PC-9 (cell line): ENCODE measurements at regions of chr1 and their contacts with region 1.

Region 1: DNA sequence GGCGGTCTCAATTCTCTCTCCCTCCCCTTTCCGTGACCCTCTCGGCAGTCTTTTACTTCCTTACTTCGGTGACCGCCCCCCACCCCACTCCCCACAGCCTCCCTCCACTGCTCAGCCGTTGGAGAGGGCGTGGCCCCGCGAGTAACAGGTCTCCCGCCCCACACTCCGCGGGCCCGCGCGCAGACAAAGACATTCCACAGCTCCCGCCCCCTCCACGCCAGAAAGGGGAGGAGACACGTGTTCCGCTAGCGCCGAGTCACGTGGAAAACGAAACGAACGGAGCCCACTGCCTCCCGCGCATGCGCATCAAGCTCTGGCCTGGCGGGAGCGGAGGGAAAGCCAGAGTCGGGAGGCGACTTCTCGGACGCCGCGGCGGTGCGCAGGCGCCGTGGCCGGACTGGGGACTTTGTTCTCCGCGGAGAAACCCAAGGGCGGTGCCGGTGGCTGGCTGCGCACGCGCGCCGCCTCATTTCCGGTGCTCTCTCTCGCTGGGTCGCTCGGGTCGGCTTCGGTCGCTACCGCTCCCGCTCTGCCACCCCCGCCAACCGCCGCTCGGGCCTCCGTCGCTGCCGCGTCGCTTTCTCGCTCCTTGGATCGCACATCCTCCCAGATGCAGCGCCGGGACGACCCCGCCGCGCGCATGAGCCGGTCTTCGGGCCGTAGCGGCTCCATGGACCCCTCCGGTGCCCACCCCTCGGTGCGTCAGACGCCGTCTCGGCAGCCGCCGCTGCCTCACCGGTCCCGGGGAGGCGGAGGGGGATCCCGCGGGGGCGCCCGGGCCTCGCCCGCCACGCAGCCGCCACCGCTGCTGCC is at the start of gene KHDRBS1:
- DNase-seq: peak; percentile 95 to 98
- H3K4me3 ChIP-seq: peak within 1 kb of the TSS; percentile 91
- H3K27ac ChIP-seq: peak within 1 kb of the TSS; percentile 74
- H3K4me1 ChIP-seq: peaks cover 23% of the 10 kb centered on the region
- H3K27me3 ChIP-seq: no peaks in the 10 kb centered on the region
- CTCF ChIP-seq: no peak
- total RNA-seq, gene KHDRBS1: 161 and 172 TPM in 2 replicates

Region 2: DNA sequence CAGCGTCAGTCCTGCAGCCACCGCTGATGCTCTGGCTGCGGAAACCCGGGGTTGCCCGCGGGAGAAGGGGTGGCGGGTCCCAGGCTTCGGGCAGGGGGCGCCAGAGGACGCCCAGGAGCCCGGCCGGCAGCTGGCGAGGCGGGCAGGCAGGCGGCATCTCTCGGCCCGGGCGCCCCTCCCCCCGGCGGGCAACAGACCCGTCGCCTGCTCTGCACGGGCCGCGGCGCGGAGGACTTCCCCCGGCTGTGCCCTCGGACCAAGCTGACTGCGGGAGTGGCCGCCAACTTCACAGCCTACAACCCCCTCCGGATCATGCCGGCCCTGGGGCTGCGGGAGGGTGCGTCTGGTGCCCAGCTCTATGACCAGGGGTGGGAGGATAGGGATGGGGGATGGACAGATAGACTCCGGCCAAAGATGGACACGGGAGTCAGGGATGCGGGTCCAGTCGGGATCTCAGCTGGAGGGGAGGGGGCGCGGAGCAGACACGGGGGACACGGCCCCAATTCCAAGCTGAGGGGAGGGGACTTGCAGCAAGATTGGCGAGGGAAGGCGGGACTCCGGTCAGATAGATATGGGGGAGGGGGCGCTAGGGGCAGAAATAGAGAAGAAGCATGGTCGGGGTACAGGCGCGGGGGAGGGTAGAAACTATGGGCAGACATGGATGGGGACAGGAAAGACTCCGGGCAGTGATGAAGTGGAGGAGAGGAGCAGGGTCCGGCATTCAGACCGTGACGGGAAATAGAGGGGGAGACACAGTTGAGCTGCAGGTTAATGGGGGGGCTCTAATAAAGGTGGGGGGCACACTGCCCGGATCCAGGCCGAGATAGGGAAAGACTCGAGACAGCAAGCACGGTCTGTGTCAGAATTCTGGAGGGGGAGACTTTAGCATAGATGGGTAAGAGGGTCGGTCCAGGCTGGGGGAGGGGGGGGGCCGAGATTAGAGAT is 250.6 kb before region 1 on chr1:
- CTCF ChIA-PET with region 1: no interaction called
- POLR2A ChIA-PET with region 1: no interaction called
- intact Hi-C with region 1: loop called (anchors 5 kb)
- DNase-seq: peak; percentile 65 to 88
- H3K4me3 ChIP-seq: peak overlapping the region; percentile 62
- H3K27ac ChIP-seq: no peak overlapping the region
- H3K4me1 ChIP-seq: peaks cover 32% of the 10 kb centered on the region
- H3K27me3 ChIP-seq: peaks cover 5% of the 10 kb centered on the region; the same call in 1 of the 2 replicates
- CTCF ChIP-seq: peak; percentile 90

Region 3: GRCh38 chr1:31910933-31911332 is 102.7 kb before region 1 on chr1:
- CTCF ChIA-PET with region 1: no interaction called
- POLR2A ChIA-PET with region 1: interaction called, 22 read pairs
- intact Hi-C with region 1: no loop called
- DNase-seq: no peak
- H3K4me3 ChIP-seq: no peak overlapping the region
- H3K27ac ChIP-seq: peak overlapping the region; percentile 9; the same call in 1 of the 2 replicates
- H3K4me1 ChIP-seq: peaks cover 21% of the 10 kb centered on the region; the same call in 1 of the 2 replicates
- H3K27me3 ChIP-seq: no peaks in the 10 kb centered on the region
- CTCF ChIP-seq: no peak

Region 4: DNA sequence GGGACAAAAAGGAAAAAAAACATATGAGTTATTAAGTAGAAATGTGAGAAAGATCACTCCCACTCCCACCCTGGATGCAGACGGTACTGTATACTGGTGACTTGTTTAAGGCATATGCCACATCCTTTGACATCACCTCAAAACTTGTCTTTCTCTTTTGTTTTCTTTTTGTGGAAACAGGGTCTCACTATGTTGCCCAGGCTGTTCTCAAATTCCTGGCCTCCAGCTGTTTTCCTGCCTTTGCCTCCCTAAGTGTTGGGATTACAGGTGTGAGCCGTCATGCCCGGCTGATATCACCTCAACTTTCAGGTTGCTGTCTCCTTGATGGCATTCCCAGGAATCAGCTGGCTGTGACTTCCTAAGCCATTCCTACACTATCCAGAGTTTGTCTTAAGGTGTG is 18.3 kb before region 1 on chr1:
- CTCF ChIA-PET with region 1: interaction called, 17 read pairs
- POLR2A ChIA-PET with region 1: no interaction called
- intact Hi-C with region 1: no loop called
- DNase-seq: no peak
- H3K4me3 ChIP-seq: no peak overlapping the region
- H3K27ac ChIP-seq: no peak overlapping the region
- H3K4me1 ChIP-seq: no peaks in the 10 kb centered on the region
- H3K27me3 ChIP-seq: no peaks in the 10 kb centered on the region
- CTCF ChIP-seq: no peak

Region 5: DNA sequence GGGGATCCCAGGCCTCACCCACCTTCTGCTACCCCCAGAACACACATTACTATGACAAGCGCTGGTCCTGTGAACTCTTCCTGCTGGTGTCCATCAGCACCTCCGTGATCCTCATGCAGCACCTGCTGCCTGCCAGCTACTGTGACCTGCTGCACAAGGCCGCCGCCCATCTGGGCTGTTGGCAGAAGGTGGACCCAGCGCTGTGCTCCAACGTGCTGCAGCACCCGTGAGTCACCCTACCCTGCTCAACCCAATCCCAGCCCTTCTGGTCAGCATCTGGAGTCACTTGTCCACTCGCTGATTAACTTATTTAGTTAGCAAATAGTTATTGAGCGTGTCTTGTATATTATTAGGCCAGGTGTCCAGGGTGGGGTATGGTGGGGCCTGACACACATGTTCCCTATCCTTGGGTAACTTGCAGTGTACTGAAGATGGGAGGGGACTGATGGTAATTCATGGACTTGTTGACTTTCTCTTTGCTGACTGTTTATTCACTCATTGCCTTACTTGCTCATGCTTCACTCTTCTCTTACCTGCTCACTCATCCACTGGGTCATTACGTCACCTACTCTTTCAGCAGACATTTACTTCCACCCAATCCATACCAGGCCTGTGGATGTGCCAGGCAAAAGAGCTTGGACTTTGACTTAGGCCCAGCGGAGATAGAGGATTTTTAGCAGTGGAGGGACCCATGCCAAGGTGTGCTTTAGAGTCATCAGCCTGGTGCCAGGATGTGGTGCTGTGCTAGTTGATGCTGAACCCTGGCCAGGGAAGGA is 81.3 kb after region 1 on chr1:
- CTCF ChIA-PET with region 1: no interaction called
- POLR2A ChIA-PET with region 1: no interaction called
- intact Hi-C with region 1: no loop called
- DNase-seq: peak in 1 of 2 experiments; percentile 42
- H3K4me3 ChIP-seq: no peak overlapping the region
- H3K27ac ChIP-seq: no peak overlapping the region
- H3K4me1 ChIP-seq: no peaks in the 10 kb centered on the region
- H3K27me3 ChIP-seq: no peaks in the 10 kb centered on the region
- CTCF ChIP-seq: no peak

Region 6: DNA sequence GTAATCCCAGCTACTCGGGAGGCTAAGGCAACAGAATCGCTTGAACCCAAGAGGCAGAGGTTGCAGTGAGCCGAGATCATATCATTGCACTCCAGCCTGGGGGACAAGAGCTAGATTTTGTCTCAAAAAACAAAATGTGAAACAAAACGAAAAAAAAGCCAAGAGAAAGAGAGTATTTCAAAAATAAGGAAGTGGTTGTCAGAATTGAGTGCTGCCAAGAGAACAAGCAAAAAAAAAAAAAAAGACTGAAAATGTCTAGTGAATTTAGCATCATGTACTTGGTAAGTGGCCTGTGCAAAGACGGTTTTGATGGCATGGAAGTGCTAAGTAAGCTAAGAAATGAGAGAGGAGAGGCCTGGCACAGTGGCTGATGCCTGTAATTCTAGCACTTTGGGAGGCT is 108.6 kb after region 1 on chr1:
- CTCF ChIA-PET with region 1: no interaction called
- POLR2A ChIA-PET with region 1: interaction called, 10 read pairs
- intact Hi-C with region 1: no loop called
- DNase-seq: no peak
- H3K4me3 ChIP-seq: no peak overlapping the region
- H3K27ac ChIP-seq: no peak overlapping the region
- H3K4me1 ChIP-seq: no peaks in the 10 kb centered on the region
- H3K27me3 ChIP-seq: no peaks in the 10 kb centered on the region
- CTCF ChIP-seq: no peak

Region 7: GRCh38 chr1:32351399-32352238 is 338.0 kb after region 1 on chr1:
- CTCF ChIA-PET with region 1: no interaction called
- POLR2A ChIA-PET with region 1: no interaction called
- intact Hi-C with region 1: loop called (anchors 5 kb)
- DNase-seq: peak; percentile 76 to 91
- H3K4me3 ChIP-seq: peak overlapping the region; percentile 74
- H3K27ac ChIP-seq: peak overlapping the region; percentile 67
- H3K4me1 ChIP-seq: peaks cover 14% of the 10 kb centered on the region; the same call in 1 of the 2 replicates
- H3K27me3 ChIP-seq: no peaks in the 10 kb centered on the region
- CTCF ChIP-seq: no peak